Posterior vena cava (tissue), 2 donors: ENCODE measurements at regions of chr10 and their contacts with region 1.

Region 1: GRCh38 chr10:67308912-67309311 is 383.1 kb downstream of the LRRTM3 start:
- DNase-seq: no peak

Region 2: GRCh38 chr10:67257018-67257417 is 51.9 kb before region 1 on chr10:
- intact Hi-C with region 1: no loop called
- DNase-seq: no peak

Region 3: DNA sequence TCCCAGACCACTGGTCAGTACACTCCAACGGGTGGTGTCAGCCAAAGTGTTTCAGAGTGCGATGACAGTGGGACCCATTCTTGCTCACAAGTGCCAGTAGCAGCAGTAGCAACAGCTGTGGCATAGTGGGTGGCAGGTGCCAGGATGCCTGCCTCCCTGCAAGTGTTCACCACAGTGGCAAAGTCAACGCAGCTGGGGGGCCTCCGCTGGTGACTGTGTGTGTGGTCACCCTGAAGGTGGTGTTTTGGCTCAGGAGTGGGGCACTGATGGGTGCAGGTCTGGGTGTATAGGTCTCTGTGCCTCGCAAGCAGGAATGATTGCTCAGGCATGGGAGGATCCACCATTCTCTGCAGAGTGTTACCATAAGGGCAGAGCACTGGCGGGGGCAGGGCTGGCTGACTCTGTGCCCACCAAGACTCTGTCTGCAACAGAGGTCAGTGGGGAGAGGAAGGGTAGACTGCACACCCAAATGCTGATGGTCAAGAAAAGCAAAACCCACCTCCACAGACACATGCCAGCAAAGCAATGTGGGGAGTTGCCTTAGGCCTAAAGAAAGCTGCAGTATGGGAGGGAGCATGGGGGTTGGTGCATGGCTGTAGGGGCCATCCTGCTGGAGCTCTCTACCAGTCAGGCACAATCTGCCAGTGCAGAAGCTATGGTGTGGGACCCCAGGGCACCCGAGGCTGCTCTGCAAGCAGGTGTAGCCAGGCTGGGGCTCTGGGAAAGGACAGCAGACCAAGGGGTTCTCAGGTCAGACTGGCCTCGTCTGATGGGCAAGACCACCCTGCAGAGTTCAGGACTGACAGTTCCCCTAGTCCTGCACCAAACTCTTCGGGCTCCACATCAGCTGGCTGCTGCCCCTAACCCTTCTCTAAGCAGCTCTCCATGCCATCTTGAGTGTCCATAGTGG is 19.0 kb after region 1 on chr10:
- intact Hi-C with region 1: loop called in 1 of 2 experiments (anchors 2 kb)
- DNase-seq: peak; percentile 59